Heart right ventricle (tissue), 16 donors: ENCODE measurements at regions of chrX and their contacts with region 1.

Region 1: GRCh38 chrX:48696301-48697181 is at the start of gene SUV39H1:
- DNase-seq: peak; percentile 86 to 88
- ATAC-seq: peak; percentile 96 to 99 (median 98)
- H3K4me3 ChIP-seq: peak within 1 kb of the TSS; percentile 38 to 67 (median 62)
- H3K27ac ChIP-seq: peak within 1 kb of the TSS; percentile 56 to 92 (median 86)
- H3K4me1 ChIP-seq: peaks cover 0 to 17% (median 4%) of the 10 kb centered on the region in 9 donors
- H3K27me3 ChIP-seq: peaks cover 0 to 10% (median 0%) of the 10 kb centered on the region in 7 donors
- CTCF ChIP-seq: no peak
- total RNA-seq, gene SUV39H1: 2.2 to 5.6 (median 3.1) TPM

Region 2: GRCh38 chrX:48558271-48558670 is 138.3 kb before region 1 on chrX:
- intact Hi-C with region 1: no loop called
- DNase-seq: no peak
- ATAC-seq: peak in 6 of 8 donors; percentile 56 to 91 (median 72)
- H3K4me3 ChIP-seq: no peak overlapping the region
- H3K27ac ChIP-seq: no peak overlapping the region
- H3K4me1 ChIP-seq: peaks cover 0 to 7% (median 0%) of the 10 kb centered on the region in 9 donors
- H3K27me3 ChIP-seq: no peaks in the 10 kb centered on the region
- CTCF ChIP-seq: no peak

Region 3: DNA sequence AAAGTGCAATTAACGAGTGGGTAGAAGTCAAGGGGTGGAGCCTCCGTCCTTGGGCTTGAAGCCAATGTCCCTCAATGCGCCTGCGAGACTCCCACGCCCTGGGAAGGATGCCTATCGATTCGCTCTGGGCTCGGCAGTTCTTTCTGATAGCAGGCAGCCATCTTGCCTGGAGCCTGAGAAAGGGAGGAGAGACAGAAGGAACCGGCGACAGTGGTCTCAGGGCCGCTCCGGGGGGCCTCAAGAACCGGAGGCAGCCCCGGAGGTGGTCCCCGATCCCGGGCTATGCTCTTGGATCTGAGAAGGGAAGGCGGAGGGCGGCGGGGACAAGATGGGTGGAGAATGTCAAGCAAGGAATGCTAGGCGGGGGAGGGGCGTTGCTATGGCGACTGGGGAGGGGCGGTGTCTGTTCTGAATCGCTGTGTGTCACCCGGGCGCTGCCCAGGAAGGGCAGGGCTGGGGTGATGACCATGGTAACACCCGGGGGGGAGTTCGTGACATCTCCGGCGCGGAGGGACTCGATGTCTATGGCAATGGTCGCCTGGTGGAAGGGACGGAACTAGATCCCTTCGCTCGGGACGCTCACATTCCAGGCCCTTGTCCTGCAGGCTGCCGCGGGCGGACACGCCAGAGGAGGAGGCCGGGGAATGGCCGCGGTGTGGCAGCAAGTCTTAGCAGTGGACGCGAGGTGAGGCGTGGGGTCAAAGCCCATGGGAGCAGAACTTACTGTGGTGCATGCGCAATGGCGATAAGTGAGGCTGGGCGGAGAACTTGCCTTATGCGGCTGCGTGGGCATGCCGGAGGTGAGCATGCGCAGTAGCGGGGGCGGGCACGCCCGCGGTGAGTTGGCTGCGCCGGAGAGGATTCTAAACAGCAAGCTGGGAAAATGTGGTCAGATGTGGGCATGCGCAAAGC is 98.9 kb before region 1 on chrX and contains the start of gene WDR13:
- intact Hi-C with region 1: loop called in 1 of 10 experiments (anchors 2 kb)
- DNase-seq: peak; percentile 90 to 95
- ATAC-seq: peak; percentile 93 to 97 (median 95)
- H3K4me3 ChIP-seq: peak within 1 kb of the TSS; percentile 41 to 80 (median 68)
- H3K27ac ChIP-seq: peak within 1 kb of the TSS; percentile 95 to 99 (median 98)
- H3K4me1 ChIP-seq: peaks cover 0 to 13% (median 4%) of the 10 kb centered on the region in 9 donors
- H3K27me3 ChIP-seq: peaks cover 0 to 5% (median 0%) of the 10 kb centered on the region in 7 donors
- CTCF ChIP-seq: peak in 2 of 9 donors; percentile 7 to 22
- total RNA-seq, gene WDR13: 121 to 176 (median 157) TPM

Region 4: GRCh38 chrX:48737213-48737938 is 40.8 kb after region 1 on chrX:
- intact Hi-C with region 1: loop called in 2 of 10 experiments (anchors 5 kb)
- DNase-seq: peak; percentile 87 to 93
- ATAC-seq: peak; percentile 99 to 100 (median 100)
- H3K4me3 ChIP-seq: peak overlapping the region; percentile 35 to 75 (median 68)
- H3K27ac ChIP-seq: peak overlapping the region; percentile 73 to 95 (median 92)
- H3K4me1 ChIP-seq: peaks cover 0 to 14% (median 0%) of the 10 kb centered on the region in 9 donors
- H3K27me3 ChIP-seq: no peaks in the 10 kb centered on the region
- CTCF ChIP-seq: no peak

Region 5: GRCh38 chrX:48794911-48795501 is 98.5 kb after region 1 on chrX:
- intact Hi-C with region 1: loop called in 4 of 10 experiments (anchors 5 to 10 kb)
- DNase-seq: no peak
- ATAC-seq: no peak
- H3K4me3 ChIP-seq: no peak overlapping the region
- H3K27ac ChIP-seq: no peak overlapping the region
- H3K4me1 ChIP-seq: peaks cover 0 to 1% (median 0%) of the 10 kb centered on the region in 9 donors
- H3K27me3 ChIP-seq: peaks cover 0 to 6% (median 0%) of the 10 kb centered on the region in 7 donors
- CTCF ChIP-seq: no peak